H1 (cell line): ENCODE measurements at regions of chr1 and their contacts with region 1.

Region 1: DNA sequence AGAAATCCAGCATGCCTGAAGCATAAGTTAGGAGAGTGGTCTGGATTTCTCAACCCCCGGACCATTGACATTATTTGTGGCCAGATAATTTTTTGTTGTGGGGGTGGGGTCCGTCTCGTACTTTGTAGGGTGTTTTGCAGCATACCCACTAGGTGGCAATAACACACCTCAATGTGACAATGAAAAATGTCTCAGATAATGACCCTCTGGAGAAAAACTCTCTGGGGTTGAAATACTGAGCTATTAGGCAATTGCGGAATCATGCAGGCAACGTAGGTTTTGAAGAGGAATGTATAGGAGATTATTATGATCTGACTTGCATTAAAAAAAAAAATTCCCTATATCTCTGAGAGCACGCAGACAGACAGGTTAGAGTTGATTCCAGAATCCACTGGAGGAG is 25.3 kb upstream of the RRP15 start:
- DNase-seq: no peak
- H3K4me3 ChIP-seq: no peak overlapping the region
- H3K27ac ChIP-seq: no peak overlapping the region
- H3K4me1 ChIP-seq: no peaks in the 10 kb centered on the region
- H3K27me3 ChIP-seq: no peaks in the 10 kb centered on the region
- CTCF ChIP-seq: peak; percentile 27 to 65 (median 55)
- EP300 ChIP-seq: no peak
- POLR2A ChIP-seq: no peak
- RAD21 ChIP-seq: peak; percentile 77 to 80

Region 2: GRCh38 chr1:218339267-218339831 is 79.5 kb after region 1 on chr1:
- CTCF ChIA-PET with region 1: interaction called, 10 read pairs
- POLR2A ChIA-PET with region 1: no interaction called
- DNase-seq: no peak
- H3K4me3 ChIP-seq: no peak overlapping the region
- H3K27ac ChIP-seq: no peak overlapping the region
- H3K4me1 ChIP-seq: no peaks in the 10 kb centered on the region
- H3K27me3 ChIP-seq: no peaks in the 10 kb centered on the region; a peak in 3 of 7 replicates
- CTCF ChIP-seq: peak in 2 of 3 experiments; percentile 13 to 52; a peak in 2 of 4 replicates
- EP300 ChIP-seq: no peak
- POLR2A ChIP-seq: no peak
- RAD21 ChIP-seq: peak; percentile 44 to 62

Region 3: DNA sequence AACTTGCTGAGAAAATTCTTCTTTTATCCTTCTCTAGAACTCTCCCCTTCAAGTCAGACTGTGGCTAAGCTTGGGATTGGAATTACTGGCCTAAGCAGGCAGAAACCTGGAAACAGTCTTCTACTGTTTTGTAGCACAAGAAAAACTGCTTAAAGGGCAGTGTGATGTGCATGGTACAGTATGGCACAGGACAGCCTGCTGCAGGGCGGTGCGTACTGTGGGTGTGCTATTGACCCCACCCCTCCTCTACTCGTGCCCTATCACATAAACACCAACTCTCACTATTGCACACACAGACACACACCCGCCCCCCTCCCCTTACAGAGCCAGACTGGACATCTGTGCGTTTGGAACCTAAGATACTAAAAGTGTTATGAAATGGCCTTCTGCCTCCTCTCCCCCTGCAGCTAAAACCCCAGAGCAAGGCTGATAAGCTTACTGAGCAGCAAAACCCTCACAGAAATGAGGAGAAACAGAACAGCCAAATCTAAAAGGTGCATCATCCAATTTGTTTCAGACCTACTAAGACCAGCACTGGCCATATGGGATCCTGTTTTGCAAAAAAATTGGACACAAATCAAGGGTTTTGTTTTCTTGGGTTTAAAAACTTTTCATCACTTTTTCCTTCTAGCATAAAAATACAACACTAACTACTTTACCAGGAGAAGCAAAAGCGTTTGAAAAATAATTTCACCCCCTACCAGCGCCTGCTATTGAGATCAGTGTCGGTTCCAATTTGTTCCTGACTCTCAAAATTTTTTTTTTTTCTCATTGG is 558.1 kb after region 1 on chr1:
- CTCF ChIA-PET with region 1: no interaction called
- POLR2A ChIA-PET with region 1: no interaction called
- DNase-seq: no peak
- H3K4me3 ChIP-seq: no peak overlapping the region
- H3K27ac ChIP-seq: no peak overlapping the region
- H3K4me1 ChIP-seq: no peaks in the 10 kb centered on the region
- H3K27me3 ChIP-seq: no peaks in the 10 kb centered on the region
- CTCF ChIP-seq: no peak
- EP300 ChIP-seq: no peak
- POLR2A ChIP-seq: no peak
- RAD21 ChIP-seq: no peak